B cell (primary cell): ENCODE measurements at regions of chr2 and their contacts with region 1.

Region 1: DNA sequence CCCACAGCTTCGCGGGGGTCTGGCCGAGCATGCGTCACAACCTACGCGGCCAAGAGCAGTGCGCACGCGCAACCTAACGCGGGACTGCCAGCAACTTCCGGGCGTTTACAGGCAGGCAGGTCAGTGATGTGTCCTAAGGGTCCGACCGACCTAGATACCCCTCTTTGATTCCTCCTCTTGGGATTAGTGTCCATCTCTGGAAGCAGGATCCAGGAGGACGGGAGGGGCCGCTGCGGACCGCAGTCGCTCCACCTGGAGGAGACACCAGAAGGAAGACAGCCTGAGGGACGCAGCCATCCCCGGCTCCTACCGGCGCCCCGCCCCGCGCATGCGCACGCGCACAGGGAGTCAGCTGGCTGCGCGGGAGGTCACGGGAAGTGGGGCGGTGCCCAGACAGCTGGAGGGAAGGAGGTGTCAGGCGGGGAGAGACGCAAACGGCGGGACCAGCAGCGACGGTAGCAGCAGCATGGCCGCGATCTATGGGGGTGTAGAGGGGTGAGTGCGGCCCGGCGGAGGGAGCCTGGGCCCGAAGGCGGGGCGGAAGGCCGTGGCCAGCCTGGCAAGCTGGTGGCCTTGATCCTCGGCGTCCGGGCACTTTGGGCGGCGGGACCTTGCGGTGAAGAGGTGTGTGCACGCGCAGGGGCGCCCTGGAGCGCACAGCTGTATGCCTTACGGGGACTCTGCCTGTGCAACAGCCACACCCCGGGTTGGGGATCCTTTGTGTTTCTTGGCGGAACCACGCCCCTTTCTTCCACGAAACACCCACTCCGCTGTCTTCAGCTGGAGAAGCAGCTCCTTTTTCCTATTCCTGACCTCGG is at the start of gene NAGK:
- DNase-seq: peak; percentile 99
- ATAC-seq: peak; percentile 74
- H3K4me3 ChIP-seq: peak within 1 kb of the TSS; percentile 69 to 99 (median 91)
- H3K4me3 Mint-ChIP-seq: peak within 1 kb of the TSS; percentile 99
- H3K27ac ChIP-seq: peak within 1 kb of the TSS; percentile 98 to 99
- H3K27ac Mint-ChIP-seq: peak within 1 kb of the TSS; percentile 100
- H3K4me1 ChIP-seq: peaks cover 79 to 84% of the 10 kb centered on the region in 2 donors
- H3K4me1 Mint-ChIP-seq: peaks cover 87% of the 10 kb centered on the region
- H3K27me3 ChIP-seq: no peaks in the 10 kb centered on the region
- H3K27me3 Mint-ChIP-seq: no peaks in the 10 kb centered on the region
- CTCF ChIP-seq: no peak
- total RNA-seq, gene NAGK: 210 and 221 TPM in 2 replicates

Region 2: DNA sequence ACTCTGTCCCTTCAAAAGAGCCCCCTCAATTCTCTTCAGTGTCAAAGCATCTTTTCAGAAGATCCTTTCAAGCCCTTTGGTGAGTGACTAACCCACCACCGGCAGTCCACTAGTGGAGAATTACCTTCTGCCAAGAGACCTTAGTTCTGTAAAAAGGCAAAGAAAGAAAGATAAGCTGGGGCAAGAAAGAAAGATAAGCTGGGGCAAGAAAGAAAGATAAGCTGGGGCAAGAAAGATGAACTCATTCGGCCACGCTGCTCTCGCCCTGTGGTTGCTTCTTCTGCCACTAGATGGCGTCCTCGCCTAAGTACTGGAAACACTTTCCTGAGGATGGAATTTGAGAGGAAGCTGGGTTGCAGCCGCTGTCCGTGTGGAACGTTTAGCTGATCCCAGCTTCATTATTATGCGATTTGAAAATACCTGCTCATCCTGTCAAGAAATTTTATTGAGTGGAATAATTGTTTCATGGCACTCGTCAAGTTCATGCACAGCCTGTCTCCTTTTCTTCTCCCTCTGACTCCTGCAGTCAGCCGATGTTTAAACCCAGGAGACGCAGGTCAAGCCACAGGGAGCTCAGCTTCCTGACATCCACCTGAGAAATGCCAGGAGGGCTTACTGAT is 1343.8 kb before region 1 on chr2:
- CTCF ChIA-PET with region 1: no interaction called
- POLR2A ChIA-PET with region 1: no interaction called
- intact Hi-C with region 1: no loop called
- DNase-seq: peak; percentile 86
- ATAC-seq: peak; percentile 74
- H3K4me3 ChIP-seq: peak overlapping the region in 4 of 5 experiments; percentile 27 to 44 (median 31)
- H3K4me3 Mint-ChIP-seq: peak overlapping the region; percentile 64
- H3K27ac ChIP-seq: no peak overlapping the region
- H3K27ac Mint-ChIP-seq: no peak overlapping the region
- H3K4me1 ChIP-seq: peaks cover 3 to 7% of the 10 kb centered on the region in 2 donors
- H3K4me1 Mint-ChIP-seq: peaks cover 7% of the 10 kb centered on the region
- H3K27me3 ChIP-seq: no peaks in the 10 kb centered on the region
- H3K27me3 Mint-ChIP-seq: peaks cover 6% of the 10 kb centered on the region
- CTCF ChIP-seq: peak; percentile 100

Region 3: GRCh38 chr2:69893684-69894551 is 1174.5 kb before region 1 on chr2 and contains the start of gene SNRNP27:
- CTCF ChIA-PET with region 1: no interaction called
- POLR2A ChIA-PET with region 1: no interaction called
- intact Hi-C with region 1: loop called (anchors 5 kb)
- DNase-seq: peak; percentile 85
- ATAC-seq: peak; percentile 88
- H3K4me3 ChIP-seq: peak within 1 kb of the TSS; percentile 67 to 96 (median 84)
- H3K4me3 Mint-ChIP-seq: peak within 1 kb of the TSS; percentile 98
- H3K27ac ChIP-seq: peak within 1 kb of the TSS; percentile 57 to 88
- H3K27ac Mint-ChIP-seq: peak within 1 kb of the TSS; percentile 95
- H3K4me1 ChIP-seq: peaks cover 9 to 16% of the 10 kb centered on the region in 2 donors
- H3K4me1 Mint-ChIP-seq: peaks cover 33% of the 10 kb centered on the region
- H3K27me3 ChIP-seq: no peaks in the 10 kb centered on the region
- H3K27me3 Mint-ChIP-seq: no peaks in the 10 kb centered on the region
- CTCF ChIP-seq: no peak
- total RNA-seq, gene SNRNP27: 52.0 and 54.8 TPM in 2 replicates

Region 4: GRCh38 chr2:70977605-70978205 is 90.7 kb before region 1 on chr2:
- CTCF ChIA-PET with region 1: no interaction called
- POLR2A ChIA-PET with region 1: interaction called, 4 read pairs
- intact Hi-C with region 1: loop called (anchors 5 kb)
- DNase-seq: peak; percentile 57
- ATAC-seq: no peak
- H3K4me3 ChIP-seq: peak overlapping the region; percentile 52 to 84 (median 64)
- H3K4me3 Mint-ChIP-seq: peak overlapping the region; percentile 95
- H3K27ac ChIP-seq: peak overlapping the region; percentile 43 to 79
- H3K27ac Mint-ChIP-seq: peak overlapping the region; percentile 93
- H3K4me1 ChIP-seq: peaks cover 16 to 22% of the 10 kb centered on the region in 2 donors
- H3K4me1 Mint-ChIP-seq: peaks cover 22% of the 10 kb centered on the region
- H3K27me3 ChIP-seq: no peaks in the 10 kb centered on the region
- H3K27me3 Mint-ChIP-seq: peaks cover 15% of the 10 kb centered on the region
- CTCF ChIP-seq: no peak

Region 5: DNA sequence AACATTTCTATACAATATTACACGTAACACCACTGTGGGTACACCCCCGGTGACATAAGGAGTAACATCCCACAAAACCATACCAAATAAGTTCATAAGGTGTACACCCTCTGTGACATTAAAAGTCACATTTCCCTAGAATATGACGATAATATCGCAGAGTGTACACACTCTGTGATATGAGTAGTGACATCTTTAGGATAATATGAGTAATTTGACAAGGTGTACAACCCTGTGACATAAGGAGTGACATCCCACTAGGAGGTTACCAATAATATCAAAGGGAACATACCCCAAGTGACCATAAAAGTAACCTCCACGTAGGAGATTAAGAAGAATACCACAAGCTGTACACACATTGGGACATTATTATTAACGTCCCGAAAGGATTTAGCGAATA is 49.8 kb before region 1 on chr2:
- CTCF ChIA-PET with region 1: interaction called, 3 read pairs
- POLR2A ChIA-PET with region 1: no interaction called
- intact Hi-C with region 1: loop called (anchors 1 kb)
- DNase-seq: no peak
- ATAC-seq: no peak
- H3K4me3 ChIP-seq: no peak overlapping the region
- H3K4me3 Mint-ChIP-seq: no peak overlapping the region
- H3K27ac ChIP-seq: no peak overlapping the region
- H3K27ac Mint-ChIP-seq: no peak overlapping the region
- H3K4me1 ChIP-seq: peaks cover 0 to under 1% of the 10 kb centered on the region in 2 donors
- H3K4me1 Mint-ChIP-seq: peaks cover 5% of the 10 kb centered on the region
- H3K27me3 ChIP-seq: peaks cover 0 to 2% (median 0%) of the 10 kb centered on the region in 4 experiments
- H3K27me3 Mint-ChIP-seq: peaks cover 4% of the 10 kb centered on the region
- CTCF ChIP-seq: no peak

Region 6: GRCh38 chr2:71100195-71100964 is 32.0 kb after region 1 on chr2:
- CTCF ChIA-PET with region 1: interaction called, 43 read pairs
- POLR2A ChIA-PET with region 1: no interaction called
- intact Hi-C with region 1: no loop called
- DNase-seq: peak; percentile 49
- ATAC-seq: peak; percentile 49
- H3K4me3 ChIP-seq: no peak overlapping the region
- H3K4me3 Mint-ChIP-seq: no peak overlapping the region
- H3K27ac ChIP-seq: no peak overlapping the region
- H3K27ac Mint-ChIP-seq: no peak overlapping the region
- H3K4me1 ChIP-seq: no peaks in the 10 kb centered on the region
- H3K4me1 Mint-ChIP-seq: no peaks in the 10 kb centered on the region
- H3K27me3 ChIP-seq: peaks cover 0 to 2% (median 1%) of the 10 kb centered on the region in 4 experiments
- H3K27me3 Mint-ChIP-seq: peaks cover 5% of the 10 kb centered on the region
- CTCF ChIP-seq: peak; percentile 73

Region 7: GRCh38 chr2:71226965-71227560 is 158.6 kb after region 1 on chr2 and contains the start of gene PAIP2B:
- CTCF ChIA-PET with region 1: no interaction called
- POLR2A ChIA-PET with region 1: interaction called, 11 read pairs
- intact Hi-C with region 1: loop called (anchors 1 kb)
- DNase-seq: peak; percentile 98
- ATAC-seq: peak; percentile 91
- H3K4me3 ChIP-seq: peak within 1 kb of the TSS; percentile 33 to 86 (median 79)
- H3K4me3 Mint-ChIP-seq: peak within 1 kb of the TSS; percentile 95
- H3K27ac ChIP-seq: peak within 1 kb of the TSS; percentile 63 to 82
- H3K27ac Mint-ChIP-seq: peak within 1 kb of the TSS; percentile 95
- H3K4me1 ChIP-seq: peaks cover 15 to 21% of the 10 kb centered on the region in 2 donors
- H3K4me1 Mint-ChIP-seq: peaks cover 28% of the 10 kb centered on the region
- H3K27me3 ChIP-seq: no peaks in the 10 kb centered on the region
- H3K27me3 Mint-ChIP-seq: peaks cover 5% of the 10 kb centered on the region
- CTCF ChIP-seq: no peak
- total RNA-seq, gene PAIP2B: 10.1 and 10.2 TPM in 2 replicates

Region 8: GRCh38 chr2:71331581-71332434 is 263.4 kb after region 1 on chr2 and contains the start of gene ZNF638:
- CTCF ChIA-PET with region 1: interaction called, 8 read pairs
- POLR2A ChIA-PET with region 1: no interaction called
- intact Hi-C with region 1: loop called (anchors 5 kb)
- DNase-seq: peak; percentile 97
- ATAC-seq: peak; percentile 97
- H3K4me3 ChIP-seq: peak within 1 kb of the TSS; percentile 85 to 92 (median 90)
- H3K4me3 Mint-ChIP-seq: peak within 1 kb of the TSS; percentile 99
- H3K27ac ChIP-seq: peak within 1 kb of the TSS; percentile 88 to 91
- H3K27ac Mint-ChIP-seq: peak within 1 kb of the TSS; percentile 100
- H3K4me1 ChIP-seq: peaks cover 21 to 22% of the 10 kb centered on the region in 2 donors
- H3K4me1 Mint-ChIP-seq: peaks cover 37% of the 10 kb centered on the region
- H3K27me3 ChIP-seq: no peaks in the 10 kb centered on the region
- H3K27me3 Mint-ChIP-seq: no peaks in the 10 kb centered on the region
- CTCF ChIP-seq: peak; percentile 82
- total RNA-seq, gene ZNF638: 221 and 227 TPM in 2 replicates

Region 9: DNA sequence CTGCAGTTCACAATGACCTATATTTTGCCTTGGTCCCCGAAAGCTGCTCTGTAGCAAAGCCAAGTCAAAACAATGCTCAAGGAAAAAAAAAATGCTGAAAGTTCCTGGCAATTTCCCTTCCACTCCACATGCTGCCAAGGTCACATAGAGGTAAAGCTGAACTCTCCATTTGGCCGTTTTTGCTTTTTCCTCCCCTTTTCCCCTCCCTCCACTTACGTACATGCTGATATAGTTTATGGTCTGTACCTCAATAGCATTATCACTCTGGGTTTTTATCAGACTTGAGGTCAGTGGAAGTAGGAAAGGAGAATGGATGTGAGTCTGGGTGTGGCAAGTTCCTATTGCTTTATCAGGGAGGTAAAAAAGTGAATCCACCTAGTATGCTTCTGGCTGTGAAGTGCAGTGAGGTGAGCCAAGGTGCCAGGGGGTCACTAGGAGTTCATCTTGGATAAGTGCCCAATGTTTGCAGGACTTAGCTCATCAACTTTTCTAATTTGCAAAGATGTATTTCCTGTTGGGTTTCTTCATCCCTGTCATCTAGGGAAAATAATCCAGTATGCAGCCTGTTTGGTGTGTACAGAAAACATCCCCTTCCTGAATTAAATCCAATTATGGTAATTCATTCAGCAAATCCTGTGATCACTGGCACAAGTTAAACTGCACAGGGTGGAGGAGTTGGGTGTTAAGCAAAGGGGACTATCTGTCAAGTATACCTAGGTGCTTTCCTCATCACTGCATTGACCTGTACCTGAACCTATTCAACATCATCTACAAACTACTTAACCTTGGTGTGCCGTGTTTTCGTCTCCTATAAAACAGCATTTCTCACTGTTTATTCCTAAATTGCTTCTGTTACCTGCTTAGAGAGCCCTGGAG is 1203.6 kb after region 1 on chr2:
- CTCF ChIA-PET with region 1: no interaction called
- POLR2A ChIA-PET with region 1: no interaction called
- intact Hi-C with region 1: no loop called
- DNase-seq: no peak
- ATAC-seq: no peak
- H3K4me3 ChIP-seq: no peak overlapping the region
- H3K4me3 Mint-ChIP-seq: no peak overlapping the region
- H3K27ac ChIP-seq: no peak overlapping the region
- H3K27ac Mint-ChIP-seq: no peak overlapping the region
- H3K4me1 ChIP-seq: no peaks in the 10 kb centered on the region
- H3K4me1 Mint-ChIP-seq: no peaks in the 10 kb centered on the region
- H3K27me3 ChIP-seq: no peaks in the 10 kb centered on the region
- H3K27me3 Mint-ChIP-seq: no peaks in the 10 kb centered on the region
- CTCF ChIP-seq: no peak